CD14-positive monocyte (primary cell): ENCODE measurements at regions of chr17 and their contacts with region 1.

Region 1: GRCh38 chr17:78865682-78866390 is 25.2 kb upstream of the USP36 start:
- DNase-seq: peak; percentile 64 to 78 (median 78)
- H3K4me3 ChIP-seq: no peak overlapping the region
- H3K4me3 Mint-ChIP-seq: no peak overlapping the region
- H3K27ac ChIP-seq: peak overlapping the region; percentile 81 to 84
- H3K27ac Mint-ChIP-seq: peak overlapping the region; percentile 64 to 96 (median 92)
- H3K4me1 ChIP-seq: peaks cover 41 to 71% of the 10 kb centered on the region in 2 donors
- H3K4me1 Mint-ChIP-seq: peaks cover 50% of the 10 kb centered on the region
- H3K27me3 ChIP-seq: no peaks in the 10 kb centered on the region
- H3K27me3 Mint-ChIP-seq: peaks cover 0 to 2% (median 1%) of the 10 kb centered on the region in 3 donors
- CTCF ChIP-seq: peak; percentile 92

Region 2: GRCh38 chr17:78822552-78822951 is 43.3 kb before region 1 on chr17:
- intact Hi-C with region 1: no loop called
- DNase-seq: no peak
- H3K4me3 ChIP-seq: no peak overlapping the region
- H3K4me3 Mint-ChIP-seq: no peak overlapping the region
- H3K27ac ChIP-seq: no peak overlapping the region
- H3K27ac Mint-ChIP-seq: peak overlapping the region in 1 of 7 donors; percentile 37
- H3K4me1 ChIP-seq: peaks cover 23 to 25% of the 10 kb centered on the region in 2 donors
- H3K4me1 Mint-ChIP-seq: peaks cover 33% of the 10 kb centered on the region
- H3K27me3 ChIP-seq: no peaks in the 10 kb centered on the region
- H3K27me3 Mint-ChIP-seq: peaks cover 0 to 2% (median 0%) of the 10 kb centered on the region in 3 donors
- CTCF ChIP-seq: no peak

Region 3: DNA sequence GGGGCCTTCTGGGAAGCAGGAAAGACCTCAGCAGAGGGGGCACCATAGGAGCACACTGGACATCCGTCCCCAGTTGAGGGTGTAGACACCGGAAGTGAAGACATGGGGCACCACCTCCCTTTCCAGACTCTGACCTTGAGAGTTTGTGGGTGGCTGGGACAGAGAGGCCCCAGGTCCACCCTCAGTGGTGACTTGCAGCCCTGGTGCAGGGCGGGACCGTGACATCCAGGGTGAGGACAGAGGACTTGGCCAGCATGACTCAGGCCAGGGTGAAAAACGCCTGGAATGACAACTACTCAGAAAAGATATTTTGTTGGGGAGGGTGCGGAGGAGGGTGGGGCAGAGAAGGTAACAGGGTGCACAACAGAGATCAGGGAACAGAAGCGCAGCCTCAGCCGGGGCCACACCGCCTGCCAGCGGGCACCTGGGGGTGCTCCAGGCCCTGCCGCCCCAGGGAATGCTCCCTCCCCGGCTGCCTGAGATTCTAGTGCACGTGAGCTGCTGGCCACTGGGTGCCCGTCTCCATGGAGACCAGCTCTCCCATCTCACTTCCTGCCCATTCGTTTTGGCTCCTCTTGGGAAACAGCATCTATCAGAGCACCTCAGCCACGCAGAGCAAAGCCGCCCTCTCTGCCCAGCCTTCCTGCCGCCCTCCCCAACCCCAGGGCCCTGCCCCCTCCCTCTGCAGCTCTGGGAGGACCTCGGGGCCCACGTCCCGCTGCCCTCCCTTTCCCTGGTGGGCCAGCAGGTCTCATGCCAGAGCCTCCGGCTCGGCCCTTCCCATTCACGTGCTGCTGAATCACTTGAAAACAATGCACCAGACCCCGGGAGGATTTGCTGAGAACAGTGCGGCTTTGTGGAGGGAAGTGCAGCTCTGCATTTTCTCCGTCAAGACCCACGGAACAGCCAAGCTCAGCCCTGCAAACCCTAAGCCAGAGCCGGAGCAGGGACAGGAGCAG is 17.6 kb after region 1 on chr17:
- intact Hi-C with region 1: loop called in 1 of 2 experiments (anchors 1 kb)
- DNase-seq: peak; percentile 96 to 98 (median 97)
- H3K4me3 ChIP-seq: peak overlapping the region in 2 of 3 experiments; percentile 14 to 59
- H3K4me3 Mint-ChIP-seq: peak overlapping the region; percentile 70 to 79
- H3K27ac ChIP-seq: peak overlapping the region; percentile 96 to 98
- H3K27ac Mint-ChIP-seq: peak overlapping the region; percentile 97 to 99 (median 98)
- H3K4me1 ChIP-seq: peaks cover 73 to 89% of the 10 kb centered on the region in 2 donors
- H3K4me1 Mint-ChIP-seq: peaks cover 75% of the 10 kb centered on the region
- H3K27me3 ChIP-seq: no peaks in the 10 kb centered on the region
- H3K27me3 Mint-ChIP-seq: peaks cover 0 to 2% (median 2%) of the 10 kb centered on the region in 3 donors
- CTCF ChIP-seq: peak; percentile 8

Region 4: GRCh38 chr17:78970834-78971773 is 105.3 kb after region 1 on chr17:
- intact Hi-C with region 1: loop called in 1 of 2 experiments (anchors 5 kb)
- DNase-seq: peak; percentile 70 to 78 (median 78)
- H3K4me3 ChIP-seq: no peak overlapping the region
- H3K4me3 Mint-ChIP-seq: peak overlapping the region; percentile 51 to 57
- H3K27ac ChIP-seq: no peak overlapping the region
- H3K27ac Mint-ChIP-seq: peak overlapping the region in 6 of 7 donors; percentile 36 to 82 (median 56)
- H3K4me1 ChIP-seq: peaks cover 4 to 8% of the 10 kb centered on the region in 2 donors
- H3K4me1 Mint-ChIP-seq: peaks cover 15% of the 10 kb centered on the region
- H3K27me3 ChIP-seq: no peaks in the 10 kb centered on the region
- H3K27me3 Mint-ChIP-seq: peaks cover 1 to 2% (median 2%) of the 10 kb centered on the region in 3 donors
- CTCF ChIP-seq: peak; percentile 91

Region 5: GRCh38 chr17:78986048-78986648 is 120.3 kb after region 1 on chr17:
- intact Hi-C with region 1: loop called in 1 of 2 experiments (anchors 5 kb)
- DNase-seq: peak; percentile 73 to 88 (median 84)
- H3K4me3 ChIP-seq: peak overlapping the region; percentile 15 to 67 (median 36)
- H3K4me3 Mint-ChIP-seq: peak overlapping the region; percentile 64 to 79
- H3K27ac ChIP-seq: peak overlapping the region; percentile 65 to 74
- H3K27ac Mint-ChIP-seq: peak overlapping the region; percentile 70 to 97 (median 95)
- H3K4me1 ChIP-seq: peaks cover 36 to 45% of the 10 kb centered on the region in 2 donors
- H3K4me1 Mint-ChIP-seq: peaks cover 41% of the 10 kb centered on the region
- H3K27me3 ChIP-seq: no peaks in the 10 kb centered on the region
- H3K27me3 Mint-ChIP-seq: no peaks in the 10 kb centered on the region
- CTCF ChIP-seq: peak; percentile 37